HCT116 (cell line): ENCODE measurements at regions of chr2 and their contacts with region 1.

Region 1: GRCh38 chr2:228681426-228681825 is 499.9 kb upstream of the SPHKAP start:
- DNase-seq: peak; percentile 34
- ATAC-seq: peak; percentile 87
- H3K4me3 ChIP-seq: no peak overlapping the region
- H3K27ac ChIP-seq: no peak overlapping the region
- H3K4me1 ChIP-seq: no peaks in the 10 kb centered on the region
- H3K27me3 ChIP-seq: no peaks in the 10 kb centered on the region
- CTCF ChIP-seq: peak; percentile 25 to 56 (median 37); a peak in 3 of 6 replicates
- POLR2A ChIP-seq: no peak
- RAD21 ChIP-seq: peak; percentile 62

Region 2: GRCh38 chr2:228268301-228268700 is 413.1 kb before region 1 on chr2:
- CTCF ChIA-PET with region 1: no interaction called
- POLR2A ChIA-PET with region 1: no interaction called
- RAD21 ChIA-PET with region 1: no interaction called
- intact Hi-C with region 1: no loop called
- DNase-seq: no peak
- ATAC-seq: no peak
- H3K4me3 ChIP-seq: no peak overlapping the region
- H3K27ac ChIP-seq: no peak overlapping the region
- H3K4me1 ChIP-seq: no peaks in the 10 kb centered on the region
- H3K27me3 ChIP-seq: no peaks in the 10 kb centered on the region
- CTCF ChIP-seq: no peak
- POLR2A ChIP-seq: no peak
- RAD21 ChIP-seq: no peak

Region 3: DNA sequence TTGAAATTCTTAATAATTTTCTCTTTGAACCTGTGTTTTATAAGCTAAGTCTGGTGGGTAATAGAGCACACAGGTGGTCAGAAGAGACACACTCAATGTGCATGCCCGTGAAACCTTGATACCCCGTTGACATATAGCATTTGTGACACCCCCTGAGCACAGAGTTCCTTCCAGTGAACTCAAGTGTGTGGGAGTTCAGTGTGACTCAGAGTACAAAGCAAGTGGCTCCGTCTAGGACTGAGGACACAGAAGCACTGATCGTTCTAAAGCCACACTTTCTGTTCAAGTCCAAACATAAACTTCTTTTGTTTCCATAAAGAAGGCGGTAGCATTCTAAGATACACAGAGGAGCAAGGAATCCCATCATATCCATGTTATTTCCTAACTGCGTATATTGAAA is 66.1 kb after region 1 on chr2:
- CTCF ChIA-PET with region 1: no interaction called
- POLR2A ChIA-PET with region 1: no interaction called
- RAD21 ChIA-PET with region 1: no interaction called
- intact Hi-C with region 1: loop called (anchors 2 kb)
- DNase-seq: no peak
- ATAC-seq: no peak
- H3K4me3 ChIP-seq: no peak overlapping the region
- H3K27ac ChIP-seq: no peak overlapping the region
- H3K4me1 ChIP-seq: no peaks in the 10 kb centered on the region
- H3K27me3 ChIP-seq: no peaks in the 10 kb centered on the region
- CTCF ChIP-seq: no peak
- POLR2A ChIP-seq: no peak
- RAD21 ChIP-seq: no peak

Region 4: DNA sequence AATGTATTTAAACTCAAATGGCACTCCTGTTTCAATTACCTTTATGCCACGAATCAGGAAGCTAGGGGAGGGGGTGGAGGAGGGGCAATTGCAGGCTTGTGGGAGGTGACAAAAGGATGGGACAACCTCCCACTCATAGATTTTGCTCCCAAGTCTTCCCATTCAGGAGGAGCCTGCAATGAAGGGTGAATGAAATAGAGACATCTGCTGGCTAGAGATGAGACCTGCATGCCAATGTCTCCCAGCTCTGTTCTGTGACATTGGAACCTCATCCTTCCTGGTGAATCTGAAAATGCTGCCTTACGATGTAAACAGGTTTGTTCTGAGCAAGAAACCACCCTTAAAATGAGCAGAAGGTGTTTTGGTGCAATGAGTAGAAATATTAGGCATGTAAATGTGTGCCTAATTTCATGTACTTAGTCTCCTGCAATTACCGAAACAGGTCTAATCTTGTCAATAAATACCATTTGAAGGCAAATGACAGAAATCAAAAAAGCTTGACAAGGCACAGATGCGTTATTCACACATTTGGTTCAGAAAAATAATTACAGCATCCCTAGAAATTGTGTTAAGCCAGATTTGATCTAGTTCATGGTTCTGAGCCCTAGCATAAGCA is 592.4 kb after region 1 on chr2:
- CTCF ChIA-PET with region 1: no interaction called
- POLR2A ChIA-PET with region 1: no interaction called
- RAD21 ChIA-PET with region 1: no interaction called
- intact Hi-C with region 1: loop called (anchors 5 kb)
- DNase-seq: peak; percentile 81
- ATAC-seq: peak; percentile 99
- H3K4me3 ChIP-seq: peak overlapping the region in 1 of 2 experiments; percentile 18; a peak in 1 of 4 replicates
- H3K27ac ChIP-seq: no peak overlapping the region
- H3K4me1 ChIP-seq: peaks cover 0 to 10% of the 10 kb centered on the region in 2 experiments; a peak in 3 of 4 replicates
- H3K27me3 ChIP-seq: no peaks in the 10 kb centered on the region
- CTCF ChIP-seq: peak; percentile 71 to 82 (median 79); a peak in 5 of 6 replicates
- POLR2A ChIP-seq: no peak
- RAD21 ChIP-seq: peak; percentile 78

Region 5: DNA sequence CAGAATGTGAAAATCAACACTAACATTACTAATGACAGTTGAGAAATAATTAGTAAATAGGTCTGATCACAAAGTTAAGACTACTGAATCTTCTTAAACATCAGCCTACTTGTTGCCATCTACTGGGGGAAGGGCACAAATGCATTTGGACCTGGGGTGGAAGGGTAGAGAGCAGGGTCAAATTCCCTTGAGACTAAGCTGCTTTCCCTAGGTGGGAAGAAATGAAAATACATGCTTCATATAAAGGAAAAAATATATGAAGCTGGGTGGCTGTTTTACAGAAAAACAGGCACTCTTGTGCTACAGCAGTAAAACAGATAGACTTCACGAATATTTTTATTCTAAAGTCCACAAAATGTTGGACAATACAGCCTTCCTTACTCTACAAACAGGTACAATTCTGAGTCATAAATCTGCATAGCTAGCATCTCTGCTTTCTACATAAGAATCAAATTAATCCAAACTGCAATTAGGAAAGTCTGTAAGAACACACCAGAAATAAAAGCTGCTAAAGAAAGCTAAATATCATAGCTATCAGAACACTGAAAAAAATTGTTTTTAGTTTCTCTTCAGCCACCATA is 1229.5 kb after region 1 on chr2:
- CTCF ChIA-PET with region 1: no interaction called
- POLR2A ChIA-PET with region 1: no interaction called
- RAD21 ChIA-PET with region 1: no interaction called
- intact Hi-C with region 1: no loop called
- DNase-seq: no peak
- ATAC-seq: peak; percentile 87
- H3K4me3 ChIP-seq: no peak overlapping the region
- H3K27ac ChIP-seq: no peak overlapping the region
- H3K4me1 ChIP-seq: peaks cover 9 to 10% of the 10 kb centered on the region in 2 experiments; a peak in 2 of 4 replicates
- H3K27me3 ChIP-seq: no peaks in the 10 kb centered on the region
- CTCF ChIP-seq: peak; percentile 34 to 46 (median 36); a peak in 5 of 6 replicates
- POLR2A ChIP-seq: no peak
- RAD21 ChIP-seq: peak; percentile 49